Naive thymus-derived CD8-positive, alpha-beta T cell (primary cell): ENCODE measurements at regions of chr17 and their contacts with region 1.

Region 1: DNA sequence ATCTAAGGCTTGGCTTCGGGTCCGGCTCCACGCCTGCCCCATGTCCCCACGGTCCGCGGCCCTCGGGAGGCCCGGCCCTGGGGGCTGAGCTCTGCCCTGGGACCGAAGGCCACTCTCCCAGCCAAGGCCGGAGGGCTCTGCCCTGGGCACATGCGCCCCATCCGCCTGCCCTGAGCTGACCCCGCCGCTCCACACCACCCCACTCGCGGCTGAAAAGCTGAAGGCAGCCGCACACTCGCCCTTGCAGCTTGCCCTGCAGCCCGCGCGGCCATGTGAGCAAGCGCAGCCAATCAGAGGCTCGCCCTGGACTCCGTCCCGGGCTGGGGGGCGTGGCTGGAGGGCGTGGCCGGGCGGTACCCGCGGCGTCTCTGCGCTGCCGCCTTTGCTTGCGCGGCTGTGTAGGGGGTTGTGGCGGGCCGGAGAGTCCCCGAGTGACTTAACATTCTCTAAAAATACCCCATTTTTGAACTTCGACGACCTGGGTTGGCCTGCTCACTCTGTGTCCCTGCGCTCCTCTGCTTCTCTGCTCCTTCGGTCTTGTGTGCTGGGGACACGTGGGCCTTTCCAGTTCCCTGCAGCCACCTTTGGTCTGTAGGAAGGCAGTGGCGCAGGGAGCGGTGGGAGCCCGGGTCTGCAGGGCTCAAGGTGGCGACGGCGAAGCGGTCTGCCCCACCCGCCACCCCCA is 8.8 kb upstream of the MAP2K3 start:
- DNase-seq: peak; percentile 84 to 95 (median 91)
- ATAC-seq: peak; percentile 86 to 90
- H3K4me3 Mint-ChIP-seq: peak overlapping the region; percentile 83 to 99 (median 94)
- H3K27ac Mint-ChIP-seq: peak overlapping the region; percentile 86 to 97 (median 92)
- H3K4me1 Mint-ChIP-seq: peaks cover 24 to 51% (median 48%) of the 10 kb centered on the region in 4 donors
- H3K27me3 Mint-ChIP-seq: no peaks in the 10 kb centered on the region

Region 2: GRCh38 chr17:21214015-21214776 is 61.5 kb before region 1 on chr17 and contains the start of gene TMEM11:
- POLR2A ChIA-PET with region 1: interaction called, 22 read pairs
- DNase-seq: peak; percentile 91 to 96 (median 94)
- ATAC-seq: peak; percentile 91 to 94
- H3K4me3 Mint-ChIP-seq: peak within 1 kb of the TSS; percentile 87 to 94 (median 92)
- H3K27ac Mint-ChIP-seq: peak within 1 kb of the TSS; percentile 87 to 95 (median 93)
- H3K4me1 Mint-ChIP-seq: peaks cover 16 to 63% (median 55%) of the 10 kb centered on the region in 4 donors
- H3K27me3 Mint-ChIP-seq: no peaks in the 10 kb centered on the region
- polyA plus RNA-seq, gene TMEM11: 19.5 to 31.9 (median 26.2) TPM

Region 3: DNA sequence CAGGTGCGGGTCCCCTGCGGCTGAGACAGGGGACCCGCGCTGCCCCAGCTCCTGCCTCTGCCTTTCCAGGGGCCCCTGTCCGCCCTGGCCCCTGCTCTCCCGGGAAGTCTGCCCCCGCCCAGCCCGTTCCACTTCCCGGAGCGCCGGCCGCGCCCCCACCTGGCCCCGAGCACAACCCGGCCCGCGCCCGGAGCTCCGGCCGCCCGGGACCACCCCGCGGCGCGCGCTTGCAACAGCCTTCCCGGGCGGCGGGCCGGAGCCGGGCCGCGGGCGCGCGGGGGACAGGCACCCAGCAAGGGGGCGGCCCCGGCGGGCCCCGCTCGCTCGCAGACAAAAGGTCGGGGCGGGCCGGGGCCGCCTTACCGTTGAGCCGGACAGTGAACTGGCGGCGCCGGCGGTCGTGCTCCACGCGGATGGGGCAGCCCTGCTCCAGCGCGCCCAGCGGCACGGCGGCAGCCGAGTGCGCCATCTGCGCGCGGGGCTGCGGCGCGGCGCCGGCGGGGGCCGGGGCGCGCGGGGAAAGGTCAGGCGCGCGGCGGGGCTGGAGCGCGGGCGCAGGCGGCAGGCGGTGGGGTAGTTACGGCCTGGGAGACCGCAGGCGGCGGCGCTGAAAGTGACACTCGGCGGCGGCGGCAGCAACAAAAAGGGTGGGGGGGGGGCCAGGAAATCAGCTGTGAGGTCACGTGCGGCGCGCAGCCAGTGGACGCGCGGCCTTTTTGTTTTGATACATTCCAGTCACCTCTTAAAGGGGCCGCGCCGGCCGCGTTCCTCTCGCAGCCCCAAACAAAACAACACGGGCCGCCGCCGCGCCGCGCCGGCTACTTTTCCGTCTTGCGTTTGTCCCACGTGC is 22.7 kb before region 1 on chr17 and contains the start of gene NATD1:
- POLR2A ChIA-PET with region 1: interaction called, 23 read pairs
- DNase-seq: peak; percentile 67 to 88 (median 73)
- ATAC-seq: peak; percentile 83 to 87
- H3K4me3 Mint-ChIP-seq: peak within 1 kb of the TSS; percentile 78 to 97 (median 88)
- H3K27ac Mint-ChIP-seq: peak within 1 kb of the TSS; percentile 83 to 97 (median 92)
- H3K4me1 Mint-ChIP-seq: peaks cover 19 to 48% (median 37%) of the 10 kb centered on the region in 4 donors
- H3K27me3 Mint-ChIP-seq: no peaks in the 10 kb centered on the region
- polyA plus RNA-seq, gene NATD1: 0.60 to 1.2 (median 0.99) TPM

Region 4: DNA sequence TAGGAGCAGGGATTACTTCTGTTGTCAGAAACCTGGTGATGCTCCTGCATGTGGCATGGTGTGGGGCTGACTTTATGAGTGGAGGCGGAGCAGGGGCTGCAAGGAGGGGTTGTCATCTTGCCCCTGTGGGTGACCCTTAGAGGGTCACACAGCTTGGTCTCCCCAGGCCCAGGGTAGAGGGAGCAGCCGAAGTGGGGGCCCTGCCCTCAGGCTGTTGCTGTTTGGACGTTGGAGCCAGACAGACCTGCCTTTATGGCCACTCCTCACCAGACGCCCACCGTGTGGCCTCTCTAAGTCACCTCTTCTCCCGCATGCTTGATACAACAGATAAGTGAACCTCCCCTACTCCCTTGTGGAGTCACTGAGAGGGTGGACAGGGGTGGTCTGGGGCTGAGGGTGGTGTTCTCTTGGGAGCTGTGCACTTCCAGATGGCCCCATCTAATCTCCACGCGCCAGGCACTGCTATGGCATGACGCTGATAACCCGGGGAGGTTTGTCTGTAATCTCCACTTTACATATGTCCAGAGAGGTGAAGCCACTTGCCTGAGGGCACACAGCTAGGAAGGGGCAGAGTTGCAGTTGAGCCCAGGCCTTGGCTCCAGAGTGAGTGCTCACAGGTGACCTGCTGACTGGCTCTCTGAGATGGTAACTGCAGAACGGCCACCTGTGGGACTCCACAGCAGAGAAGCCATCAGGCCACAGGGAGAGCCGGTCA is 18.8 kb after region 1 on chr17:
- POLR2A ChIA-PET with region 1: interaction called, 10 read pairs
- DNase-seq: no peak
- ATAC-seq: no peak
- H3K4me3 Mint-ChIP-seq: no peak overlapping the region
- H3K27ac Mint-ChIP-seq: peak overlapping the region in 7 of 10 donors; percentile 16 to 79 (median 33)
- H3K4me1 Mint-ChIP-seq: peaks cover 17 to 50% (median 30%) of the 10 kb centered on the region in 4 donors
- H3K27me3 Mint-ChIP-seq: peaks cover 2 to 17% (median 6%) of the 10 kb centered on the region in 5 donors